CD4-positive, alpha-beta memory T cell (primary cell): ENCODE measurements at regions of chr7 and their contacts with region 1.

Region 1: DNA sequence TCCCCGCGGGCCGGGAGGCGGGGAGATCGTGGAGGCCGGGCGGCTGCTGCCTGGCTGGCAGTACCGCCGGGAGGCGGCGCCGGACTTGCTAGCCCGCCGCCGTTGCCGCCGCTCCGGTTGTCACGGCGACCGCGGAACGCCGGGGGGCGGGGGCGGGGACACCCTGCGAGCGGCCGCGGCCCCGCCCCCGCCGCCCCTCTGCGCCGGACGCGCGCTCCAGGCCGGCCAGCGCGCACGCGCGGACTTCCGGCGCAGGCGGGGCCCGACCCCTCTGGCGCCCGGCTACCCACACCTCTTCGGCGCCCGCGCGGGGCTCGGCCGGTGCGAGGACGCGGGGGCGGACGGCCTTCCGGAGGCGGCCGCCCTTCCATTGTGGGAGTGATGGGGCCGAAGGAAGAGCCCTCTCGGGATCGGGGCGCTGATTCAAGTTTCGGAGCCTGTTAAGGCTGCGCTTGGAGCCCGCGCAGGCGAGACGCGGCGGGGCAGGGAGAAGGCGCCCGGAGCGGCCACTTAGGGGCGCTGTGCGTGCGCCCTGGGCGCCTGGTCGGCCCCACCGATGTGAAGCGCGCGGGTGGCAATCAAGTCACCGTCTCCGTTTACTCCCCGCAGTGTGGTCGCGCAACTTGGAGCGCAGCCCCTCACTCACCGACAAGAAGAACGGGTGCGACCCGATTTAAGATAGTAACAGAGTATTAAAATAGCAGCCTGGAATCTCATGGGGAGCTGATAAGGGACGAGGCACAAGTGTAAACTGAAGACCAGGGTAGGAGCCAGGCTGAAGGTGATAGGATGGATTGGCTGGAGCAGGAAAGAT is 448 bp upstream of the DPY19L1 start:
- DNase-seq: peak; percentile 84 to 92 (median 88)
- H3K4me3 ChIP-seq: peak overlapping the region; percentile 17 to 58
- H3K4me3 Mint-ChIP-seq: peak overlapping the region; percentile 88 to 95 (median 90)
- H3K27ac ChIP-seq: peak overlapping the region; percentile 41
- H3K27ac Mint-ChIP-seq: peak overlapping the region; percentile 76 to 92 (median 87)
- H3K4me1 ChIP-seq: peaks cover 29% of the 10 kb centered on the region
- H3K4me1 Mint-ChIP-seq: peaks cover 22 to 39% (median 30%) of the 10 kb centered on the region in 4 donors
- H3K27me3 ChIP-seq: no peaks in the 10 kb centered on the region
- H3K27me3 Mint-ChIP-seq: no peaks in the 10 kb centered on the region

Region 2: DNA sequence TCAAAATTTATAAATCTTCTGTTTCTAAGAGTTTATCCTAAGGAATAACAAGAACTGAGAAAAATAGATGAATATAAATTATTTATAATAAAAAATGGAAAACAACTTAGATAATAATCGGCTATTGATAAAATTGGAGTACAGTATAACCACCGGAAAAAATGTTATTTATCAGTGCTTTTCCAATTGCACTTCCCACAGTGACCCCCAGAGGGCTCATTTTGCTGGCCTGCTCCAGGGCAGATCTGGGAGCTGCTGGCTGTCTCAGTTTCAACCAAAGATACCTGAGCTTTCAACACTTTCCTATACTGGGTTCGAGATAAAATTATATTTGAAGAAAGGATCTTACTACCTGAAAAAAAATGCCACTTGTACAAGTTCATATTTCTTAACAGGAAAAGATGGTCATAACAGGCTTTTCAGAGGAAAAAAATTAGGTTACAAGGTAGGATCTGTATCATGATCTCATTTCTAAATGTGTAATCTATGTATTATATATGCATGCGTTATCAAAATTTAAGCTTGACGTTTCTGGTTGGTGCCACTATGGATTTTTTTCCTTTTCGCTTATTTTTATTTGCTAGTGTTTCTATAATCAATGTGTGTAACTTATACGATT is 214.0 kb before region 1 on chr7:
- CTCF ChIA-PET with region 1: interaction called, 29 read pairs
- POLR2A ChIA-PET with region 1: no interaction called
- intact Hi-C with region 1: loop called (anchors 1 kb)
- DNase-seq: peak; percentile 22 to 55 (median 36)
- H3K4me3 ChIP-seq: no peak overlapping the region
- H3K4me3 Mint-ChIP-seq: no peak overlapping the region
- H3K27ac ChIP-seq: no peak overlapping the region
- H3K27ac Mint-ChIP-seq: no peak overlapping the region
- H3K4me1 ChIP-seq: no peaks in the 10 kb centered on the region
- H3K4me1 Mint-ChIP-seq: no peaks in the 10 kb centered on the region
- H3K27me3 ChIP-seq: no peaks in the 10 kb centered on the region
- H3K27me3 Mint-ChIP-seq: no peaks in the 10 kb centered on the region

Region 3: GRCh38 chr7:34991938-34992840 is 45.5 kb before region 1 on chr7:
- CTCF ChIA-PET with region 1: no interaction called
- POLR2A ChIA-PET with region 1: interaction called, 8 read pairs
- intact Hi-C with region 1: loop called (anchors 1 kb)
- DNase-seq: peak; percentile 29 to 75 (median 34)
- H3K4me3 ChIP-seq: peak overlapping the region in 1 of 2 donors; percentile 25
- H3K4me3 Mint-ChIP-seq: peak overlapping the region; percentile 65 to 94 (median 85)
- H3K27ac ChIP-seq: peak overlapping the region; percentile 10
- H3K27ac Mint-ChIP-seq: peak overlapping the region; percentile 82 to 96 (median 93)
- H3K4me1 ChIP-seq: peaks cover 22% of the 10 kb centered on the region
- H3K4me1 Mint-ChIP-seq: peaks cover 16 to 27% (median 21%) of the 10 kb centered on the region in 4 donors
- H3K27me3 ChIP-seq: no peaks in the 10 kb centered on the region
- H3K27me3 Mint-ChIP-seq: no peaks in the 10 kb centered on the region

Region 4: DNA sequence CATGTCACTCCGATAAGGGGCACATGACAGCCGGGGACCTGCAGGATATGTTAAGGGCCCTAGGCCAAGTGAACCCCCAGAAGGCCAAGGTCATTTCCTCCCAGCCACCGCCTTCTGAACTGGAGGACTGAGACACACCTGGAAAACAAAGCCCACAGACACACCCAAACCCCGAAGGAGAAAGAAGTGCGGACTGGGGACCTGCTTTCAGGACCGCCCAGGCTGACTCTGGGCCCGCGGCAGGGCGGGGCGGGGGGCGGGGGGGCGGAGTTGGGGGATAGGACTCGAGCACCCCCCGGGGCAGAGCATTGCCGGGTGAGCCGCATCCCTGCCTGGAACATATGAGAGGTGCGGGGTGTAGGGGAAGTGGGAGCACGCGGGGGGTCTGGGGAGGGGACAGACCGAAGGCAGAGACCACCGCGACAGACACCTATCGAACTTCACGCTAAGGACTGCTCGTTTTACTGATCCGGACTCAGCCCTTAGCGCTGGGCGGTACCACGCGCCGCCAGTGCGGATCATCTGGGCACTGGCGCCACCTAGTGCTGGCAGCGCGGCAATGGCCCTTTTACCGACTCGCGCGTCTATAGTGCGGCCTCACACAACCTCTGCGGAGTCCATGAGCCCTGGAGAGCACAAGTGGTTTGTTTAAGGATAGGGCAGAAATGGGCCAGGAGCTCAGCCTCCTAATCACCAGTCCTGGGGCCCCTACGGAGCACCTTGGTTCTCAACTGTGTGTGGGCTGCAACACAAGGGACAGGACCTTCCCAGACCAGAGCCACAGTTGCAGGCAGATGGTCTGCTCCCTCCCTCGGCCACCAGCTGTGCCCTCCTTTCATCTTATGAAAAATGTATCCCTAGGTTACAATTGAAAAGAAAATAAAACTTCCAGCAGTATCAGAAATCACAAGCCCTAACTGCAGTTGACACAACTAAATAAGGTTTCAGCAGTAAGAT is 499.6 kb after region 1 on chr7:
- CTCF ChIA-PET with region 1: no interaction called
- POLR2A ChIA-PET with region 1: no interaction called
- intact Hi-C with region 1: loop called (anchors 1 kb)
- DNase-seq: peak; percentile 68 to 78 (median 75)
- H3K4me3 ChIP-seq: peak overlapping the region in 1 of 2 donors; percentile 31
- H3K4me3 Mint-ChIP-seq: peak overlapping the region; percentile 77 to 93 (median 84)
- H3K27ac ChIP-seq: no peak overlapping the region
- H3K27ac Mint-ChIP-seq: peak overlapping the region in 2 of 7 donors; percentile 32 to 80
- H3K4me1 ChIP-seq: no peaks in the 10 kb centered on the region
- H3K4me1 Mint-ChIP-seq: peaks cover 0 to 3% (median under 1%) of the 10 kb centered on the region in 4 donors
- H3K27me3 ChIP-seq: no peaks in the 10 kb centered on the region
- H3K27me3 Mint-ChIP-seq: peaks cover 3 to 7% of the 10 kb centered on the region in 2 donors

Region 5: DNA sequence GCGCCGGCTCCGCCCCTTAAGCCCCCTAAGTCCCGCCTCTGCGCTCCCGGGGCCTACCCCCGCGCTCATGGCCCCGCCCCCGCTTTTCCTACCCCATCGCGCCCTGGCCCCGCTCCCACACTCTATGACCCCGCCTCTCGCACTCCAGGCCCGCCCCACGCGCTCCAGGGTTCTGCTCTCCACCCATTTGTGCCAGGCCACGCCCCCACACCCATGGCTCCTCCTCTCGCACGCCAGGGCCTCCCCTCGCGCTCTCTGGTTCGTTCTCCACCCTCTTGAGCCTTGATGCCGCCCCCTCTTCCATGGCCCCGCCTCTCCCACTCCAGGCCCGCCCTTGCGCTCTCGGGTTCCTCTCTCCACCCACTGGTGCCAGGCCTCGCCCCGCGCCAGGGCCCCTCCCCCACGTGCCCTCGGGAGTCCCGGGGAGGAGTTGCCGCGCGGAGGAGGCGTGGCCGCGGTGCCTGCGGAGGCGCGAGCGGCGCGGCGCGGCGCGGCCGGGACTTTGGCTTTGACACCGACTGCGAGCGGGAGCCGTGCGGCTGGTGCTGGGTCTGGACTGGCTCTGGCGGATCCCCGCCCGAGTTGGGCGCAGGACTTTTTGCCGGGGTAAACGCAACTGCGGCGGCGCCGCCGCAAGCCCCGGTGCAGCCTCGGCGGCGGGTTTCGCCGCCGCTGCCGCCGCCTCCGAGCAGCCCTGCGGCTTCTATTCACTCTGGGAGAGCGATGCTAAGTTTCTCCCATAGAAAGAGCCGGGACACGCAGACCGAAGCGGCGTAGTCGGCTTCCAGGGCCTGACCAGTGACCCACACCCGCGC is 1115.2 kb after region 1 on chr7 and contains the start of gene EEPD1:
- CTCF ChIA-PET with region 1: no interaction called
- POLR2A ChIA-PET with region 1: no interaction called
- intact Hi-C with region 1: loop called (anchors 2 kb)
- DNase-seq: peak; percentile 99 to 100 (median 100)
- H3K4me3 ChIP-seq: peak within 1 kb of the TSS; percentile 63 to 72
- H3K4me3 Mint-ChIP-seq: peak within 1 kb of the TSS; percentile 81 to 87 (median 84)
- H3K27ac ChIP-seq: peak within 1 kb of the TSS; percentile 53
- H3K27ac Mint-ChIP-seq: peak within 1 kb of the TSS; percentile 46 to 82 (median 73)
- H3K4me1 ChIP-seq: peaks cover 44% of the 10 kb centered on the region
- H3K4me1 Mint-ChIP-seq: peaks cover 17 to 48% (median 42%) of the 10 kb centered on the region in 4 donors
- H3K27me3 ChIP-seq: no peaks in the 10 kb centered on the region
- H3K27me3 Mint-ChIP-seq: no peaks in the 10 kb centered on the region
- total RNA-seq, gene EEPD1: 6.3 to 8.0 TPM

Region 6: GRCh38 chr7:36280840-36281812 is 1243.4 kb after region 1 on chr7:
- CTCF ChIA-PET with region 1: no interaction called
- POLR2A ChIA-PET with region 1: no interaction called
- intact Hi-C with region 1: loop called (anchors 10 kb)
- DNase-seq: no peak
- H3K4me3 ChIP-seq: no peak overlapping the region
- H3K4me3 Mint-ChIP-seq: peak overlapping the region in 3 of 8 donors; percentile 29 to 46 (median 31)
- H3K27ac ChIP-seq: no peak overlapping the region
- H3K27ac Mint-ChIP-seq: peak overlapping the region in 5 of 7 donors; percentile 7 to 66 (median 43)
- H3K4me1 ChIP-seq: peaks cover 57% of the 10 kb centered on the region
- H3K4me1 Mint-ChIP-seq: peaks cover 25 to 64% (median 43%) of the 10 kb centered on the region in 4 donors
- H3K27me3 ChIP-seq: no peaks in the 10 kb centered on the region
- H3K27me3 Mint-ChIP-seq: no peaks in the 10 kb centered on the region